AG04450 (cell line): ENCODE measurements at regions of chr7 and their contacts with region 1.

Region 1: DNA sequence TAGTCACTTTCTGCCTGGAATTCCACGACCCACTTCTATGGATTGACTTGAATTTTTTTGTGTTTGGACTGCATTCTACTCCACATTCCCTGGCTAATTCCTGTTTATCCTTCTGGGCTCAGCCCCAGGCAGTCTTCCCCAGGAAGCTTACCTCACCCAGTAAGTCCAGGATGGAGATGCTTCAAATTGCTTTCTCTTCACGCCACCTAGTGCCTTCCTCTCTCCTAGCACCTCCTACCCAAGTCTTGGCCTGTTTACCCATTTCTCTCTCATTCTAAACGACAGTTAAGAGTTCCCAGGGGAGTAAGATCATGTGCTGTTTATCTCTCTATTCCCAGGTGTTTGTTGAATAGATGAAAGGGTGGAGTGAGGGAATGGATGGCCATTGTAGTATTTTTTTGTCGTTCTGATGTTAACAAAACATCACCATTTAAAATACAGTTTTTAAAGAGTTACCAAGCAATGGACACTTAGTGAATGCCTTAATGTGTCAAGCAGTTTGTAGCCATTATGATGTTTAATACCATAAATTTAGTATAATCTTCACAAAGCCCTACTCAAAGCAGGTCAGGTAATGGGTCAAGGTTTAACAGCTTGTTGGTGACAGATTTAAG is 45.5 kb upstream of the TARP start:
- DNase-seq: peak; percentile 51
- H3K4me3 ChIP-seq: no peak overlapping the region
- H3K27ac ChIP-seq: no peak overlapping the region
- H3K27me3 ChIP-seq: no peaks in the 10 kb centered on the region
- CTCF ChIP-seq: peak; percentile 82

Region 2: GRCh38 chr7:38107486-38107893 is 211.4 kb before region 1 on chr7:
- CTCF ChIA-PET with region 1: interaction called, 23 read pairs
- POLR2A ChIA-PET with region 1: no interaction called
- DNase-seq: peak; percentile 4
- H3K4me3 ChIP-seq: no peak overlapping the region
- H3K27ac ChIP-seq: no peak overlapping the region
- H3K27me3 ChIP-seq: no peaks in the 10 kb centered on the region
- CTCF ChIP-seq: peak; percentile 83

Region 3: GRCh38 chr7:38411404-38411803 is 92.5 kb after region 1 on chr7:
- CTCF ChIA-PET with region 1: no interaction called
- POLR2A ChIA-PET with region 1: no interaction called
- DNase-seq: no peak
- H3K4me3 ChIP-seq: no peak overlapping the region
- H3K27ac ChIP-seq: no peak overlapping the region
- H3K27me3 ChIP-seq: no peaks in the 10 kb centered on the region
- CTCF ChIP-seq: peak; percentile 31; the same call in 1 of the 2 replicates

Region 4: GRCh38 chr7:38773430-38773829 is 454.5 kb after region 1 on chr7:
- CTCF ChIA-PET with region 1: no interaction called
- POLR2A ChIA-PET with region 1: no interaction called
- DNase-seq: no peak
- H3K4me3 ChIP-seq: no peak overlapping the region
- H3K27ac ChIP-seq: no peak overlapping the region
- H3K27me3 ChIP-seq: no peaks in the 10 kb centered on the region
- CTCF ChIP-seq: no peak